ENCODE measurements at regions of chr1 and their contacts with region 1.

Region 1: GRCh38 chr1:28668191-28668955 is at the start of gene GMEB1:
- DNase-seq: peak; percentile 76 to 90 (median 82)
- H3K4me3 ChIP-seq: peak within 1 kb of the TSS; percentile 93
- H3K4me3 Mint-ChIP-seq: peak within 1 kb of the TSS; percentile 92 to 97 (median 95)
- H3K27ac ChIP-seq: peak within 1 kb of the TSS; percentile 94
- H3K27ac Mint-ChIP-seq: peak within 1 kb of the TSS; percentile 97 to 100 (median 99)
- H3K4me1 ChIP-seq: peaks cover 5% of the 10 kb centered on the region
- H3K4me1 Mint-ChIP-seq: peaks cover 17 to 30% (median 23%) of the 10 kb centered on the region in 3 donors
- H3K27me3 ChIP-seq: no peaks in the 10 kb centered on the region
- H3K27me3 Mint-ChIP-seq: peaks cover 0 to 1% of the 10 kb centered on the region in 2 donors
- total RNA-seq, gene GMEB1: 21.3 to 21.8 TPM

Region 2: DNA sequence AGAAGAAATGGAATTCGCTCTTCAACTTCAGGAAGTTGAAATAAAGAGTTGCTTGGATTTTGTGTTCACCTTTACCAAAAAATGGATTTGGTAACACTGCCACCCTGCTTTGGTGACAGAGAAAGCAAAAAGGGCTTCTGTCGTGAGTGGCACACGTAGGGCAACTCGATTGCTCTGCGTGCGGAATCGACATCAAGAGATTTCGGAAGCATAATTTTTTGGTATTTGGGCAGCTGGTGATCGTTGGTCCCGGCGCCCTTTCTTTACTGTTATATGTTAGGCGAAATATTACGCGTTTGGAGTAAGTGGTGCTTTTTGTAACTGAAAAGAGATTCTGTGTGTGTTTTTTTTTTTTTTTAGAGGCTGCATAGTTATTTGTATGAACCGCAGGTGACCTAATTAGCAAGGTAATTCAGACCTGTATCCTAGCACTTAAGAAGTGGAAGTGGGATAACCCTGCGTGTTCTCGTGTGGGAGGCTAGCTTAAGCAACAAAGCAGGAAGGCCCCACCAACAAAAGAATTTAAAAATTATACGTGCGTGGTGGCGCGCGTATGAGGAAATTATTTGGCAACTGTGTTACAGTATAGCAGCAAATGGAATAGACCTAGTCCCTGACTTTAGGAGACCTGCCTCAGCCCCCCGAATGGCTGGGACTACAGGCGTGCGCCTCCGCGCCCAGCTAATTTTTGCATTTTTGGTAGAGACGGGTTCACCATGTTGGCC is 19.7 kb before region 1 on chr1 and contains the start of gene RNU11:
- CTCF ChIA-PET with region 1: interaction called, 31 read pairs
- POLR2A ChIA-PET with region 1: interaction called, 83 read pairs
- DNase-seq: peak; percentile 75 to 94 (median 93)
- H3K4me3 ChIP-seq: peak within 1 kb of the TSS; percentile 89
- H3K4me3 Mint-ChIP-seq: peak within 1 kb of the TSS; percentile 79 to 92 (median 90)
- H3K27ac ChIP-seq: peak within 1 kb of the TSS; percentile 99
- H3K27ac Mint-ChIP-seq: peak within 1 kb of the TSS; percentile 95 to 100 (median 99)
- H3K4me1 ChIP-seq: peaks cover 30% of the 10 kb centered on the region
- H3K4me1 Mint-ChIP-seq: peaks cover 24 to 37% (median 33%) of the 10 kb centered on the region in 3 donors
- H3K27me3 ChIP-seq: no peaks in the 10 kb centered on the region
- H3K27me3 Mint-ChIP-seq: peaks cover 0 to 6% of the 10 kb centered on the region in 2 donors
- total RNA-seq, gene RNU11: not detected

Measured in CD8-positive, alpha-beta memory T cell (primary cell).